Ovary (tissue), 10 donors: ENCODE measurements at regions of chr7 and their contacts with region 1.

Region 1: DNA sequence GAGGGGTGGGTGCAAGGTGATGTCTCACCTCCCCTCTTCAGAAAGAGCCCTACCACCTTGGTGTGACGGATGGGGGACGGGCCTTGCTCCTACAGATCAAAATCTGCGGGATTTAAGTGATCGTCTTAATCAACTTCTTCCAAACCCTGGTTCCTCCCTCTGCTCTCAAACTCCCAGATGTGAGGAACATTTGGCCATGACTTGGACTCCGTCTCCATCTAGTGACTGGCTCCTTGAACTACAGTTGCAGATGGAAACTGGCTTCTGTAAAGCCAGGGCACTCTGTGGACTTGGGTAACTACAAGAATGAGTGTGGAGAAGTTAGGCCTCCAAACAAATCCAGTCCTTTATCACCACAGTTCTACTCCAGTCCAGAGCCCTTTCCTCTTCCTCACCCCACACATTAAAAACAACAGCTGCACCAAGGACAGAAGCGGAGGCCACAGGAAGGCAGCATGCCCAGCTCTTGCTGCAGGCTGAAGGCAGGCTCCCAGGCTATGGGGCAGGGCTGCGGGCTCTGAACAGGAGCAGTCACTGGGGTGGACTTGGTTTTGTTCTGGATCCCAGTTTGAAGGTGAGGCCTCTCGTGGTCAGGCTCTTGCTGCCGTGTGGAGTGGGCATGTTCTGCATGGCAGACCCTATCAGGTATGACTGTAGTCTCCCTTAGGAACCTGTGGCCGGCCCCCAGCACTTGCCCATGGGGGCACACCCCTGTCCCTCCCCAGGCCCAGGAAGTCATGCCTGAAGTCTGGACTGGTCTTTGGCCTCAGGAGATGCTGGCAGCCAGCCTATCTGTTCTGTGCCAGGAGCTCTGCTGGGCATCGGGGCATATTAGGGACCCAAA is 79.4 kb downstream of the VWC2 start:
- DNase-seq: peak; percentile 51 to 61 (median 59)
- H3K4me3 ChIP-seq: no peak overlapping the region
- H3K27ac ChIP-seq: peak overlapping the region in 1 of 2 donors; percentile 18
- H3K4me1 ChIP-seq: no peaks in the 10 kb centered on the region
- H3K27me3 ChIP-seq: no peaks in the 10 kb centered on the region
- CTCF ChIP-seq: peak; percentile 59 to 81 (median 68)
- EP300 ChIP-seq: no peak
- POLR2A ChIP-seq: no peak

Region 2: DNA sequence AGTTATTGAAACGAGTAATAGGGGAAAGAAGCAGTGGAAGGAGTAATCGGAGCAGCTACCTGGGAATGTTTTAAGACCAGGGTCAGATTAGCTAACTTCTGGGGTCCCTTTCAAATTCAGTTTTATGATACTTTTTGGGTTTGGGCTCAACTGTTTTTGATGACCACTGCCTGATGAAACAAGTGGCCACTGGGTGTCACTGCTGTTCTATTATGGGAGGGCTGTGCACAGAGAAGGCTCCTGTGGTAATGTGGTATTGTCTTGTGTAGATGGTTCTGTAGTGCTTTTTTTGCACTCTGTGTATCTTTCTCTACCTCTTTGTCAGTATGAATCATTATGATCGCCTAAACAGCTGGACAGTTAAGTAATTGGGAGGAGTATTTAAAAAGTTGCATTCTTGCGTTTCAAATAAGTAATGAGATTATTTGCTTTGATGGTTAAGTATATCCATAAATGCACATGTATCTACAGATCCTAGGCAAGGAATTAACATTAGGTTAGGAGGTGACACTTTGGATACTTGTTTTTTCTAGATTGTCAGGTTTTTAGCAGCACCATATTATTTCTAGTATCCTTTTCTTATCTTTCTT is 1553.2 kb before region 1 on chr7:
- intact Hi-C with region 1: loop called in 1 of 4 experiments (anchors 10 kb)
- DNase-seq: peak; percentile 51 to 67 (median 62)
- H3K4me3 ChIP-seq: no peak overlapping the region
- H3K27ac ChIP-seq: no peak overlapping the region
- H3K4me1 ChIP-seq: no peaks in the 10 kb centered on the region
- H3K27me3 ChIP-seq: no peaks in the 10 kb centered on the region
- CTCF ChIP-seq: peak in 2 of 3 donors; percentile 34 to 62
- EP300 ChIP-seq: no peak
- POLR2A ChIP-seq: no peak

Region 3: GRCh38 chr7:48312151-48312550 is 1540.7 kb before region 1 on chr7:
- intact Hi-C with region 1: loop called in 1 of 4 experiments (anchors 10 kb)
- DNase-seq: no peak
- H3K4me3 ChIP-seq: no peak overlapping the region
- H3K27ac ChIP-seq: no peak overlapping the region
- H3K4me1 ChIP-seq: no peaks in the 10 kb centered on the region
- H3K27me3 ChIP-seq: no peaks in the 10 kb centered on the region
- CTCF ChIP-seq: no peak
- EP300 ChIP-seq: no peak
- POLR2A ChIP-seq: no peak

Region 4: GRCh38 chr7:49483142-49483541 is 369.7 kb before region 1 on chr7:
- intact Hi-C with region 1: loop called in 1 of 4 experiments (anchors 10 kb)
- DNase-seq: no peak
- H3K4me3 ChIP-seq: no peak overlapping the region
- H3K27ac ChIP-seq: no peak overlapping the region
- H3K4me1 ChIP-seq: peaks cover 2% of the 10 kb centered on the region
- H3K27me3 ChIP-seq: no peaks in the 10 kb centered on the region
- CTCF ChIP-seq: no peak
- EP300 ChIP-seq: no peak
- POLR2A ChIP-seq: no peak

Region 5: GRCh38 chr7:49776994-49777393 is 75.8 kb before region 1 on chr7:
- intact Hi-C with region 1: loop called in 2 of 4 experiments (anchors 10 kb)
- DNase-seq: peak in 4 of 5 donors; percentile 34 to 60 (median 46)
- H3K4me3 ChIP-seq: no peak overlapping the region
- H3K27ac ChIP-seq: peak overlapping the region in 1 of 2 donors; percentile 10
- H3K4me1 ChIP-seq: peaks cover 4% of the 10 kb centered on the region
- H3K27me3 ChIP-seq: no peaks in the 10 kb centered on the region
- CTCF ChIP-seq: no peak
- EP300 ChIP-seq: no peak
- POLR2A ChIP-seq: no peak

Region 6: DNA sequence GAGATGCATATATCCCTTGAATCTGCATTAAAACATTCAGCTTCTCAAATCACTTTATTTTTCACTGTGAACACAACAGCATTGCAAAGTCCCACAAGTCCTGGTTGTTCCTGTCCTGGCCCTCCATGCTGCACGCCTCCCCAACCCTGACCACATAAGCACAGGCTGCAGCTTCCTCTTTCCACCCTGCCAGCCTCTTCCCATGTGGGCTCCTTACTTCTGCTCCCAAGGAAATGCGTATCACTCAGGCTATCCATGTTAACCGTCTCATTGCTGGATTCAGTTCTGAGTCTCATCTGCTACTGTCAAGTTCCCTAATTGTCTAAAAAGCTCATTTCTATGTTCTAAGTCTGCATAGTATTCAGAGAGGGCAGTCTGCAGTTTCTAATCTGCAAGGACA is 329.9 kb after region 1 on chr7:
- intact Hi-C with region 1: no loop called
- DNase-seq: no peak
- H3K4me3 ChIP-seq: no peak overlapping the region
- H3K27ac ChIP-seq: no peak overlapping the region
- H3K4me1 ChIP-seq: no peaks in the 10 kb centered on the region
- H3K27me3 ChIP-seq: no peaks in the 10 kb centered on the region
- CTCF ChIP-seq: no peak
- EP300 ChIP-seq: no peak
- POLR2A ChIP-seq: no peak

Region 7: DNA sequence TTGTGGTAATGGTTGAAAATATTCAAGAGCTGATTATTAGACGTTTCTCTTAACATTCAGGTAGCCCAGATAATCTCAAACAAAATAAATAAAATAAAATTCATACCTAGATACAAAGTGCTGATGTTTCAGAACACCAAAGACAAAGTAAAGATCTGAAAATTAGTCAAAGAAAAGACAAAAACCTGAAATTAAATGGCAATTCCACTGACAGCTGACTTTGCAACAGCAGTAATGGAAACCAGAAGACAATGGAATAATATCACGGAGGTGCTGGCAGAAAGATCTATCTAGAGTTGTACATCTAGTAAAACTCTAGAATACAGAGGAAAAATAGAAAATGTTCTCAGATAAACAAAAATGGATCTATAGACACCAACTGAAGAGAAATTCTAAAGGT is 393.7 kb after region 1 on chr7:
- intact Hi-C with region 1: no loop called
- DNase-seq: no peak
- H3K4me3 ChIP-seq: no peak overlapping the region
- H3K27ac ChIP-seq: no peak overlapping the region
- H3K4me1 ChIP-seq: no peaks in the 10 kb centered on the region
- H3K27me3 ChIP-seq: no peaks in the 10 kb centered on the region
- CTCF ChIP-seq: no peak
- EP300 ChIP-seq: no peak
- POLR2A ChIP-seq: no peak

Region 8: GRCh38 chr7:51187941-51188340 is 1335.1 kb after region 1 on chr7:
- intact Hi-C with region 1: no loop called
- DNase-seq: peak; percentile 26 to 64 (median 39)
- H3K4me3 ChIP-seq: no peak overlapping the region
- H3K27ac ChIP-seq: peak overlapping the region in 1 of 2 donors; percentile 21
- H3K4me1 ChIP-seq: peaks cover 2% of the 10 kb centered on the region
- H3K27me3 ChIP-seq: no peaks in the 10 kb centered on the region
- CTCF ChIP-seq: no peak
- EP300 ChIP-seq: no peak
- POLR2A ChIP-seq: no peak